ENCODE measurements at regions of chr1 and their contacts with region 1.

Region 1: DNA sequence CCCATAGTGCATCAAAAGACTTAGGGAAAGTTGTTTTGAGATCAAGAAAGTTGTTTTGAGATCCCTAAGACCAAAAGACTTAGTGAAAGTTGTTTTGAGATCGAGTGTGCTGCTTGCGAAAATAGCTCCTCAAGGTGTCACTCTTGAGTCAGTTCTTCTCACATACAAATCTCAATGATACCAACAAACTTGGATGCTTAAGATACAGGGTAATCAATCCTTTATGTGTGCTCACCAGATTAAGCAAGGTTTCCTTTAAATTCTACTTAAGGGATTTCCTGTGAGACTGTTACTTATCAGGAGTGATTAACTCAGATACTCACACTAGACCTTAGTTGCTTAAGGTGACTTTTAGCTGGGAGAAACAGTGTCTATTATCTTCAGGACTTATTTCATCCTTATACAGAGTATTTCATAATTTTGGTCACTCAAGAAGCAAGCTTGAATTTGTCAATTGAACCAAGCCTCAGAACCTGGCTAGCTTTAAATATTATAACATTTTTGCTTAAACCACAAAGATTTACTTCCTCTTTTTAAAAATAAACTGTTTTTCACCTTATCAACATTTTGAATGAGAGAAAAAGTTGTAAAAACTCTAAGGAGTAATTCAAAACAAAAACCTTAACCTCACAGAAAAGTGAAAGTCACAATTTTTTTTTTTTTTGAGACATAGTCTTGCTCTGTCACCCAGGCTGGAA is 8.0 kb upstream of the RLF start:
- DNase-seq: peak; percentile 63
- ATAC-seq: peak; percentile 72
- H3K4me3 Mint-ChIP-seq: no peak overlapping the region
- H3K27ac Mint-ChIP-seq: no peak overlapping the region
- H3K4me1 Mint-ChIP-seq: peaks cover 9% of the 10 kb centered on the region
- H3K27me3 Mint-ChIP-seq: peaks cover 11% of the 10 kb centered on the region

Region 2: GRCh38 chr1:40003156-40004148 is 149.8 kb before region 1 on chr1:
- CTCF ChIA-PET with region 1: no interaction called
- POLR2A ChIA-PET with region 1: no interaction called
- DNase-seq: no peak
- ATAC-seq: no peak
- H3K4me3 Mint-ChIP-seq: no peak overlapping the region
- H3K27ac Mint-ChIP-seq: no peak overlapping the region
- H3K4me1 Mint-ChIP-seq: peaks cover 2% of the 10 kb centered on the region
- H3K27me3 Mint-ChIP-seq: peaks cover 4% of the 10 kb centered on the region

Region 3: GRCh38 chr1:40040511-40041465 is 112.4 kb before region 1 on chr1 and contains the start of gene CAP1:
- CTCF ChIA-PET with region 1: no interaction called
- POLR2A ChIA-PET with region 1: no interaction called
- DNase-seq: peak; percentile 100
- ATAC-seq: peak; percentile 89
- H3K4me3 Mint-ChIP-seq: peak within 1 kb of the TSS; percentile 93
- H3K27ac Mint-ChIP-seq: peak within 1 kb of the TSS; percentile 99
- H3K4me1 Mint-ChIP-seq: peaks cover 61% of the 10 kb centered on the region
- H3K27me3 Mint-ChIP-seq: no peaks in the 10 kb centered on the region
- total RNA-seq, gene CAP1: 805 to 847 TPM

Region 4: DNA sequence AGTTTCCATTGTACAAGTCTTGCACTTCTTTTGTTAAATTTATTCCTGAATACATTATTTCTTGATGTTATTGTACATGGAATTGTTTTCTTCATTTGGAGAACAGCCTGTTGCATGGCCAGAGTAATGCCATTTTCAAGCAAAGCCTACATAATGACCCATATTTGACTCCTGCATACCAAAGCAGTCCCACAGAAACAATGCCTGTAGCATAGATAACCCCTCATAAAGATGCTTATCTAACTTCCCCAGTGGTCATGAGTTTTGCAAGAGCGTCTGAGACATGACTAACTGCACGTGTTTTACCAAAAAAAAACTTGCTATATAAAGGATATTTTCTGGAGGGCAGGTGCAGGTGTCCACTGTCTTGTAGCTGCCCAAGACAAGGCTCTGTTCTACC is 22.3 kb before region 1 on chr1:
- CTCF ChIA-PET with region 1: interaction called, 13 read pairs
- POLR2A ChIA-PET with region 1: no interaction called
- DNase-seq: no peak
- ATAC-seq: no peak
- H3K4me3 Mint-ChIP-seq: no peak overlapping the region
- H3K27ac Mint-ChIP-seq: no peak overlapping the region
- H3K4me1 Mint-ChIP-seq: peaks cover 2% of the 10 kb centered on the region
- H3K27me3 Mint-ChIP-seq: peaks cover 13% of the 10 kb centered on the region

Region 5: GRCh38 chr1:40224040-40224439 is 70.8 kb after region 1 on chr1:
- CTCF ChIA-PET with region 1: interaction called, 14 read pairs
- POLR2A ChIA-PET with region 1: interaction called, 3 read pairs
- DNase-seq: no peak
- ATAC-seq: no peak
- H3K4me3 Mint-ChIP-seq: no peak overlapping the region
- H3K27ac Mint-ChIP-seq: no peak overlapping the region
- H3K4me1 Mint-ChIP-seq: peaks cover 17% of the 10 kb centered on the region
- H3K27me3 Mint-ChIP-seq: no peaks in the 10 kb centered on the region

Region 6: GRCh38 chr1:40257688-40258444 is 104.6 kb after region 1 on chr1 and contains the start of gene ZMPSTE24:
- CTCF ChIA-PET with region 1: interaction called, 15 read pairs
- POLR2A ChIA-PET with region 1: interaction called, 6 read pairs
- DNase-seq: peak; percentile 98
- ATAC-seq: peak; percentile 96
- H3K4me3 Mint-ChIP-seq: peak within 1 kb of the TSS; percentile 99
- H3K27ac Mint-ChIP-seq: peak within 1 kb of the TSS; percentile 100
- H3K4me1 Mint-ChIP-seq: peaks cover 49% of the 10 kb centered on the region
- H3K27me3 Mint-ChIP-seq: no peaks in the 10 kb centered on the region
- total RNA-seq, gene ZMPSTE24: 28.9 to 29.8 TPM

Region 7: GRCh38 chr1:40305457-40305856 is 152.2 kb after region 1 on chr1:
- CTCF ChIA-PET with region 1: interaction called, 26 read pairs
- POLR2A ChIA-PET with region 1: interaction called, 3 read pairs
- DNase-seq: no peak
- ATAC-seq: no peak
- H3K4me3 Mint-ChIP-seq: no peak overlapping the region
- H3K27ac Mint-ChIP-seq: no peak overlapping the region
- H3K4me1 Mint-ChIP-seq: no peaks in the 10 kb centered on the region
- H3K27me3 Mint-ChIP-seq: no peaks in the 10 kb centered on the region

Region 8: DNA sequence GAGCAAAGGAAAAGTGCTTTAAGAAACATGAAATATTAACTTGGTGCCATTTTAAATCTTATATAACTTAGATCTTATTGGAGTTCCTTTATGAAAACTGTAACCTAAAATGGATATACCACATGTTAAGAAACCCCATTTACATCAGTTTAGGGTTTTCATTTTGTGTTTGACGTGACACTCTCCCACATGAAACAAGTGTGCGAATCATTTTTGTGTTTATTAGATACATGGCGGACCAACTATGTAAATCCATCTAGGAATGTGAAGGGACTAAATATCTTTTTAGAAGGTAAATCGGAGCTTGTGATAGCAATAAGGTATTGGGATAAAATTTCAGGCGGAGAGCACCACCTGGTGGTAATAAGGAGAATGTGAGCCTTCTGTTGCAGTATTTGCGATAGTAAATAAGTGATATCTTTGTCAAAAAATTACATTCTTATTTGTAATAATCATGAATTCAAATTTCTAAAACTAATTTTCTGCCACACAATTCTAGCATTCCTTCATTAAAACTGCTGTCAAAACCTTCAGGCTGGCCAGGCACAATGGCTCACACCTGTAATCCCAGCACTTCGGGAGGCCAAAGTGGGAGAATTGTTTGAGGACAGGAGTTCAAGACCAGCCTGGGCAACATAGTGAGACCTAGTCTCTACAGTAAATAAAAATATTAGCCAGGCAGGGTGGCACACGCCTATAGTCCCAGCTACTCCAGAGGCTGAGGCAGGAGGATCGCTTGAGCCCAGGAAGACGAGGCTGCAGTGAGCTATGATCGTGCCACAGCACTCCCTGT is 251.6 kb after region 1 on chr1:
- CTCF ChIA-PET with region 1: interaction called, 34 read pairs
- POLR2A ChIA-PET with region 1: no interaction called
- DNase-seq: peak; percentile 67
- ATAC-seq: peak; percentile 57
- H3K4me3 Mint-ChIP-seq: no peak overlapping the region
- H3K27ac Mint-ChIP-seq: peak overlapping the region; percentile 75
- H3K4me1 Mint-ChIP-seq: peaks cover 52% of the 10 kb centered on the region
- H3K27me3 Mint-ChIP-seq: no peaks in the 10 kb centered on the region

Measured in activated CD8-positive, alpha-beta T cell treated with anti-CD3 and anti-CD28 coated beads, Interleukin-2, amount 10 ng/mL, durations not matched to agents 7 days and 5 days (primary cell).